ENCODE measurements at regions of chr1 and their contacts with region 1.

Region 1: DNA sequence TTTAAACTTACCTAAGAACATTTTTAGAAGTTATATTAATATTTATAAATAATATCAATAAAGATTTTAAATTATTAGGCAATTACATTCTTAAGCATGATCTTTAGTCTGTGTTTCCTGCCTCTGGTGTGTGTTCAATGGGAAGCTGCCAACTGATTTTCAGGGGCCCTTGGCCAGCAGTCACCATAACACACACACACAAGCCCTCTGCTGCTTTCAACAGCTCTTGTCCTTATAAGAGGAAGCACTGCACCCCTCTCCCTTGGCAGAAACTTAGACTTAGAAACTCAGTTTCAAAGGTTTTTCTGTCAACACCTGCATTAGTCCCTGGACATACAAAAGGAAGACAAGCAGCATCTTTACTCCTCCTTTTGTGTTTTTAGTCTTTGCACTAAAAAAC is 81.4 kb downstream of the VAV3 start:
- DNase-seq: no peak
- ATAC-seq: no peak
- H3K4me3 ChIP-seq: no peak overlapping the region
- H3K4me3 Mint-ChIP-seq: no peak overlapping the region
- H3K27ac ChIP-seq: no peak overlapping the region
- H3K27ac Mint-ChIP-seq: no peak overlapping the region
- H3K4me1 ChIP-seq: peaks cover 3% of the 10 kb centered on the region
- H3K4me1 Mint-ChIP-seq: peaks cover 25% of the 10 kb centered on the region
- H3K27me3 ChIP-seq: no peaks in the 10 kb centered on the region
- H3K27me3 Mint-ChIP-seq: no peaks in the 10 kb centered on the region
- CTCF ChIP-seq: no peak

Region 2: GRCh38 chr1:107135463-107135862 is 748.1 kb before region 1 on chr1:
- CTCF ChIA-PET with region 1: no interaction called
- POLR2A ChIA-PET with region 1: no interaction called
- intact Hi-C with region 1: no loop called
- DNase-seq: peak in 3 of 9 experiments; percentile 7 to 15 (median 9)
- ATAC-seq: no peak
- H3K4me3 ChIP-seq: no peak overlapping the region
- H3K4me3 Mint-ChIP-seq: no peak overlapping the region
- H3K27ac ChIP-seq: no peak overlapping the region
- H3K27ac Mint-ChIP-seq: no peak overlapping the region
- H3K4me1 ChIP-seq: no peaks in the 10 kb centered on the region
- H3K4me1 Mint-ChIP-seq: peaks cover 9% of the 10 kb centered on the region
- H3K27me3 ChIP-seq: peaks cover 0 to 6% of the 10 kb centered on the region in 2 experiments
- H3K27me3 Mint-ChIP-seq: peaks cover 22% of the 10 kb centered on the region
- CTCF ChIP-seq: no peak

Region 3: GRCh38 chr1:107835151-107835670 is 48.4 kb before region 1 on chr1:
- CTCF ChIA-PET with region 1: no interaction called
- POLR2A ChIA-PET with region 1: no interaction called
- intact Hi-C with region 1: loop called in 1 of 2 experiments (anchors 5 kb)
- DNase-seq: no peak
- ATAC-seq: no peak
- H3K4me3 ChIP-seq: no peak overlapping the region
- H3K4me3 Mint-ChIP-seq: no peak overlapping the region
- H3K27ac ChIP-seq: no peak overlapping the region
- H3K27ac Mint-ChIP-seq: no peak overlapping the region
- H3K4me1 ChIP-seq: peaks cover 34% of the 10 kb centered on the region
- H3K4me1 Mint-ChIP-seq: peaks cover 69% of the 10 kb centered on the region
- H3K27me3 ChIP-seq: no peaks in the 10 kb centered on the region
- H3K27me3 Mint-ChIP-seq: no peaks in the 10 kb centered on the region
- CTCF ChIP-seq: no peak

Region 4: DNA sequence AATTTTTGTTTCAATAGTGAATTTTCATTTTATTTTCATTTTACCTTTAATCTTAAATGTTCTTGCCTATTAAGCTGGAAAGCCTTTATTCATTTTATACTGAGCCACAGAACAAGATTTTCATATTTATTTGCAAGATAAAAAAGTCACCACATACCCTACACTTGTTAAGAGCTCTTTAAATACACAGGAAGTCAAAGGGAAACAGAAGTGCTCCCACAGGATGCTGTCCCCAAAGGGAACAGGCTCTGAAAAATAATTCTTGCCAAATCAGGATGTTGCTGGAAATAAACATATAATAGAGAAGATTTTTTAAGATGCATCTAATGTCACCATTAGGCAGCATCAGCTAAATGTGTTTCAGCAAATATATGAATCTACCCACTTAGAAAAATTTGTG is 32.1 kb before region 1 on chr1:
- CTCF ChIA-PET with region 1: no interaction called
- POLR2A ChIA-PET with region 1: no interaction called
- intact Hi-C with region 1: loop called in 1 of 2 experiments (anchors 1 kb)
- DNase-seq: no peak
- ATAC-seq: no peak
- H3K4me3 ChIP-seq: no peak overlapping the region
- H3K4me3 Mint-ChIP-seq: no peak overlapping the region
- H3K27ac ChIP-seq: no peak overlapping the region
- H3K27ac Mint-ChIP-seq: no peak overlapping the region
- H3K4me1 ChIP-seq: peaks cover 7% of the 10 kb centered on the region
- H3K4me1 Mint-ChIP-seq: peaks cover 26% of the 10 kb centered on the region
- H3K27me3 ChIP-seq: no peaks in the 10 kb centered on the region
- H3K27me3 Mint-ChIP-seq: no peaks in the 10 kb centered on the region
- CTCF ChIP-seq: no peak

Region 5: GRCh38 chr1:107919953-107920352 is 36.4 kb after region 1 on chr1:
- CTCF ChIA-PET with region 1: no interaction called
- POLR2A ChIA-PET with region 1: no interaction called
- intact Hi-C with region 1: loop called in 1 of 2 experiments (anchors 5 kb)
- DNase-seq: no peak
- ATAC-seq: no peak
- H3K4me3 ChIP-seq: no peak overlapping the region
- H3K4me3 Mint-ChIP-seq: no peak overlapping the region
- H3K27ac ChIP-seq: peak overlapping the region in 1 of 2 experiments; percentile 5
- H3K27ac Mint-ChIP-seq: no peak overlapping the region
- H3K4me1 ChIP-seq: peaks cover 11% of the 10 kb centered on the region
- H3K4me1 Mint-ChIP-seq: peaks cover 27% of the 10 kb centered on the region
- H3K27me3 ChIP-seq: no peaks in the 10 kb centered on the region
- H3K27me3 Mint-ChIP-seq: no peaks in the 10 kb centered on the region
- CTCF ChIP-seq: no peak

Region 6: DNA sequence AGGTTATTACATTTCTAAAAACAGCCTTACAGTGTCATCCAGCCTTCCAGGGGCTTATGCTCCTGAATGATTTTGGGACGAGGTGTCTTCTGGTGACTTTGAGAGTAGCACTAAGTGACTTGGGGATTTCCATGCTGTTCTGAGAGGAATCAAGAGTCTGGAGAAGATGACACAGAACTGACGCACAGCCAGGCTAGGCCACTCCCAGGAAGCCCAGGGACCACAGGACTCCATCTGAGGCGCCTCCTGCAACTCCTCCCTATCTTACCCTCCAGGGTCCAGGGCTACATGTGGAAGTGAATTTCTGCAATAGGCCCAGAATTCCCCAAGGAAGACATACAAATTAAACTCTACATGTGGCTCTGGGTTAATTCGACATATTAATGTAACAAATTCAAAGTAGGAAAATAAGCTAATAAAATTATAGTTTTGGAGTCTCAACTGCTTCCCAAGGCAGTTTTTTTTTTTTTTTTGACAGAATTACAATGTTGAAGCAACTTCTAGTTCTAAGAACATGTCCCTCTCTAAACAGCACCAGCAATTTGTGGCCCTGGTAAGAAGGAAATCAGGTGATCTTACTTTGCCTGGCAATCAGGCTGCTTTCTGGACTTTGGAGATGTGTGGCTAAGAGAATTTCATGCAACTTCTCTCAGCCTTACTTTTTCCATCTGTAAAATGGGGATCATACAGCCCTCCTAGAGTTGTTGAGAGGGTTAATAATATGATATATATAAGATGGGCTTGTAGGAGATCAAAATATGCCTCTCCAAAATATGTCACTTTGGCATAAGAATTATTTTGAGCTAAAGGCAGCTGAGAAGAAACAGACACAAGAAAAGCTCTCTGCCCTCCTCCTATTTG is 224.3 kb after region 1 on chr1:
- CTCF ChIA-PET with region 1: no interaction called
- POLR2A ChIA-PET with region 1: no interaction called
- intact Hi-C with region 1: no loop called
- DNase-seq: peak in 4 of 9 experiments; percentile 17 to 57 (median 40)
- ATAC-seq: peak; percentile 54
- H3K4me3 ChIP-seq: no peak overlapping the region
- H3K4me3 Mint-ChIP-seq: no peak overlapping the region
- H3K27ac ChIP-seq: no peak overlapping the region
- H3K27ac Mint-ChIP-seq: peak overlapping the region; percentile 57
- H3K4me1 ChIP-seq: no peaks in the 10 kb centered on the region
- H3K4me1 Mint-ChIP-seq: peaks cover 4% of the 10 kb centered on the region
- H3K27me3 ChIP-seq: no peaks in the 10 kb centered on the region
- H3K27me3 Mint-ChIP-seq: no peaks in the 10 kb centered on the region
- CTCF ChIP-seq: no peak

Region 7: DNA sequence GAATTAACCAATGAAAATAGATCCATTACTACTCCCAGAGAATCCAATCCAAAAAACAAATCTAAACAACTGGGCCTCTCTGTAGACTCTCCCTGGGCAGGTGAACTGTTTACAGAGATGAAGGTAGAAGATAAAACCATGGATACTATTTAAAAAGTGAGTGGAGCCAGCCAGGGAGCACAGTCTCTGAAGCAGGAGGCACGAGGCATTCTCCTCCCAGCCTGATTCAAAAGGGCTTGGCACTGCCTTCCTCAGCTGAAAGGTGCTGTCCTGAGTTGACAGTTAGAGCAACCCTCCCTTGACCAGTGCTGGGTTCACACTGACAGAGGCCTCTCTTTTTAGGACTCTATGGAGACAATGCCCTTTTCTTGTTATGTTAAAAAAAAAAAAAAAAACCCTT is 740.5 kb after region 1 on chr1:
- CTCF ChIA-PET with region 1: no interaction called
- POLR2A ChIA-PET with region 1: no interaction called
- intact Hi-C with region 1: no loop called
- DNase-seq: no peak
- ATAC-seq: no peak
- H3K4me3 ChIP-seq: no peak overlapping the region
- H3K4me3 Mint-ChIP-seq: no peak overlapping the region
- H3K27ac ChIP-seq: no peak overlapping the region
- H3K27ac Mint-ChIP-seq: no peak overlapping the region
- H3K4me1 ChIP-seq: no peaks in the 10 kb centered on the region
- H3K4me1 Mint-ChIP-seq: no peaks in the 10 kb centered on the region
- H3K27me3 ChIP-seq: no peaks in the 10 kb centered on the region
- H3K27me3 Mint-ChIP-seq: no peaks in the 10 kb centered on the region
- CTCF ChIP-seq: no peak